Activated naive CD4-positive, alpha-beta T cell treated with anti-CD3 and anti-CD28 coated beads for 36 hours (primary cell): ENCODE measurements at regions of chr19 and their contacts with region 1.

Region 1: GRCh38 chr19:41263850-41264580 is at the start of gene HNRNPUL1:
- DNase-seq: peak; percentile 99
- H3K4me3 Mint-ChIP-seq: peak within 1 kb of the TSS; percentile 91
- H3K27ac Mint-ChIP-seq: peak within 1 kb of the TSS; percentile 99
- H3K4me1 Mint-ChIP-seq: peaks cover 28% of the 10 kb centered on the region
- H3K27me3 Mint-ChIP-seq: no peaks in the 10 kb centered on the region
- total RNA-seq, gene HNRNPUL1: 298 to 301 TPM

Region 2: DNA sequence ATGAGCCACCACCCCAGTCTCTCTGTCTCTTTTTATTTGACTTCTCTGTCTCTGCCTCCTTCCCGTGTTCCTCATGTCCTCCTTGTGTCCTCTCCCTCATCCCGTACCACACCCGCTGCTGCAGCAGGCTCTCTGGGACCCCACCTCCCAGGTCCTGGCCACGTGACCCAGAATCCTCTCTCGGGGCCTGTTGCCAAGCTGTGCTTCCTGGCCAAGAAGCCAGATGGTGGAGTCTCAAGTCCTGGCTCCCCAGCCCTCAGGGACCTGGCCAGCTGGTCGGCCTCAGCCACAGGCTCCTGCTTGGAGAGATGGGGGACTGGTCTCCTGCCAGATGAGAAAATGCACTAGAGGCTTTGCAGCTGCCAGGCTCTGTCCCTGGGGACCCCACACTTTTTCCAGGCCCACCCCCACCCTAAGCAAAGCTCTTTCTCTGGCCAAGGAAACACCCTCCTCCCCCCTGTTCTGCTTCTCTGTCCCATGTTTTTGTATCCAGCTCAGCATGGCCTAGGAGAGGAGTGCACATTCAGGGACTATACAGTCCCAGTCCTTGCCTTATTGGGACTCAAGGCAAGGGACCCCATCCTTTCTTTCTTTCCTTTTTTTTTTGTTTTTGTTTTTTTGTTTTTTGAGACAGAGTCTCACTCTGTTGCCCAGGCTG is 721.7 kb before region 1 on chr19:
- CTCF ChIA-PET with region 1: no interaction called
- intact Hi-C with region 1: no loop called
- DNase-seq: no peak
- H3K4me3 Mint-ChIP-seq: no peak overlapping the region
- H3K27ac Mint-ChIP-seq: no peak overlapping the region
- H3K4me1 Mint-ChIP-seq: no peaks in the 10 kb centered on the region
- H3K27me3 Mint-ChIP-seq: peaks cover 6% of the 10 kb centered on the region

Region 3: GRCh38 chr19:40750059-40750873 is 513.7 kb before region 1 on chr19 and contains the start of gene ACTMAP:
- CTCF ChIA-PET with region 1: no interaction called
- intact Hi-C with region 1: loop called (anchors 2 kb)
- DNase-seq: peak; percentile 100
- H3K4me3 Mint-ChIP-seq: peak within 1 kb of the TSS; percentile 99
- H3K27ac Mint-ChIP-seq: peak within 1 kb of the TSS; percentile 99
- H3K4me1 Mint-ChIP-seq: peaks cover 33% of the 10 kb centered on the region
- H3K27me3 Mint-ChIP-seq: no peaks in the 10 kb centered on the region
- total RNA-seq, gene ACTMAP: 23.0 to 25.0 TPM

Region 4: DNA sequence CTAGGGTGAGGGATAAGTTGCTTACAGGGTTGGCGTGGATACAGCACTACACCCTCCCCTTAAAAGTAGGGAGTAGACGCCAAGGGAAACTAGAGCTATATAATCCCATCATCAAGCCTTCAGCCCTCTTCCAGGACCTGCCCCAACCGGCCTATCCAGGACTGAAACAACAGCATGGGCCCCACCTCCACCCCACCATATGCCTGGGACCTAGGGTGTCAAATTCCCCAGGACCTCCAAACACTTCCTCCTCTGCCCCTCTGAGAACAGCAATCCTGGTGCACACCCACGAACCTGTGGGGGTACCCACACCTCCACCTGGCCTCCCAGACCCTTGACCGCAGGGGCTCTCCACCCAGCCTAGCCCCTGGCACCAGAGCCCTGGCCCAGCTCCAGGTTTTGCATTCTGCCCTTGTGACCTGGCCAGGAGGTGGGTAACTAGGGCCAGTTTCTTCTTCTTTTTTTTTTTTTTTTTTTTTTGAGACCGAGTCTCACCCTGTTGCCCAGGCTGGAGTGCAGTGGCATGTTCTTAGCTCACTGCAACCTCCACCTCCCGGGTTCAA is 151.2 kb before region 1 on chr19:
- CTCF ChIA-PET with region 1: no interaction called
- intact Hi-C with region 1: no loop called
- DNase-seq: no peak
- H3K4me3 Mint-ChIP-seq: no peak overlapping the region
- H3K27ac Mint-ChIP-seq: no peak overlapping the region
- H3K4me1 Mint-ChIP-seq: no peaks in the 10 kb centered on the region
- H3K27me3 Mint-ChIP-seq: no peaks in the 10 kb centered on the region

Region 5: DNA sequence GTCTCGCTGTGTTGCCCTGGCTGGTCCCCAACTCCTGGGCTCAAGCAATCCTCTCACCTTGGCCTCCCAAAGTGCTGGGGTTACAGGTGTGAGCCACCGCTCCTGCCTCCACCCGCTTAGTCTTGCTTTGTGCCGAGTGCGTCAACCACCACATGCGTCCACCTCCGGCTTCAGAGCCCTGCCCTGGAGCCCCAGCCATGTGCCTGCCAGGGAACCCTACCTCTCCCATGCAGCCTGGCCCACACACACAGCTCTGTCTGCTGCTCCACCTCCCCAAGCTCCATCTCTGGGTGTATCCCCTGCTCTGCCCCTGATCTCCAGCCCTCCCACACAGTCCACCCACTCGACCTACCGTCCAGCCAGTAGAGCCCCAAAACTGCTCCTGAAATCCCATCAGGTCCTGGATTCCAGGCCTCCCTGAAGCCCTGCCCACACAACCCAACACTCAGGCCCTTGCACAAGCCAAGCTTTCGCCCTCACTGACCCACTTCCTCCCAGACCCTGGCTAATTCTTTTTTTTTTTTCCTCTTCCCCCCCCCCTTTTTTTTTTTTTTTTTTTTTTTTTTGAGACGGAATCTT is 140.2 kb before region 1 on chr19:
- CTCF ChIA-PET with region 1: interaction called, 6 read pairs
- intact Hi-C with region 1: loop called (anchors 2 kb)
- DNase-seq: no peak
- H3K4me3 Mint-ChIP-seq: no peak overlapping the region
- H3K27ac Mint-ChIP-seq: no peak overlapping the region
- H3K4me1 Mint-ChIP-seq: peaks cover 27% of the 10 kb centered on the region
- H3K27me3 Mint-ChIP-seq: no peaks in the 10 kb centered on the region

Region 6: GRCh38 chr19:41298348-41298964 is 34.4 kb after region 1 on chr19:
- CTCF ChIA-PET with region 1: interaction called, 6 read pairs
- intact Hi-C with region 1: loop called (anchors 1 kb)
- DNase-seq: no peak
- H3K4me3 Mint-ChIP-seq: no peak overlapping the region
- H3K27ac Mint-ChIP-seq: peak overlapping the region; percentile 77
- H3K4me1 Mint-ChIP-seq: peaks cover 87% of the 10 kb centered on the region
- H3K27me3 Mint-ChIP-seq: no peaks in the 10 kb centered on the region

Region 7: DNA sequence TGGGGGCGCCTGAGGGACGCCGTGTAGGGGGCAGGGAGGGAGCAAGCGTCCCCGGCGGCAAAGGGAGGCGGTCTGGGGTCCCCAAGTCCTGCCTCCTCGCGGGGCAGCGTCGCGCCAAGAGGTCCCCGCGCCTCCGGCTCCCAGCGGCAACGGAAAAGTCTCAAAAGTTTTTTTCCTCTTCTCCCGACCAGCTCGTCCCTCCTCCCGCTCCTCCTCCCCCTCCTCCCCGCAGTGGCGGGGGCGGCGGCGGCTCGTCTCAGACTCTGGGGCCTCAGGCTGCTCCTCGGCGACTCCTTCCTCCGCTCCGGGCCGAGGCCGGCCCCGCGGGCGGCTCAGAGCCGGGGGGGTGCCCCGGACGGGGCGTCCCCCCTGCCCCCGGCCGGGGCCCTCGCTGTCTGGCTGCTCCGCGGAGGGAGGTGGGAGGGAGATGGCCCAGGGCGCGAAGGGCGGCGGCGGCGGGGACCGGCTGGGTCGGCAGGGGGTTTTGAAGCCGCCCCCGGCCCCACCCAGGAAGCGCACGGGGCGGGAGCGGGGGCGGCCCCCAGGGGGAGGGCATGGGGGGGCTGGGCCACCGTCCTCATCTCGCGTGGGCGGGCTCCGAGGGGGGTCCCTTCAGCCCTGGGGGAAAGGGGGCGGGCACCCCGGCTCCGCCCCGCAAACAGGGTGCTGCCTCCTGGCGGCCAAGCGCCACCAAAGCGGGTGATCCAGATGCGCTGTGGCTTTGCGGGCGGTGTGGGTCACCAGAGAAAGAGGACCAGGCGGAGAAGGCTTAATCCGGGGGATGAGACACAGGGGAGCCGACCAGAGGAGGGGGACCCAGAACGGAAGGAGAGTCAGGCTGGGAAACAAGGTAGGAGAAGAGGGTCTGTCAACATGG is 89.7 kb after region 1 on chr19 and contains the start of gene TGFB1:
- CTCF ChIA-PET with region 1: interaction called, 5 read pairs
- intact Hi-C with region 1: loop called (anchors 1 kb)
- DNase-seq: peak; percentile 94
- H3K4me3 Mint-ChIP-seq: peak within 1 kb of the TSS; percentile 91
- H3K27ac Mint-ChIP-seq: peak within 1 kb of the TSS; percentile 97
- H3K4me1 Mint-ChIP-seq: peaks cover 60% of the 10 kb centered on the region
- H3K27me3 Mint-ChIP-seq: no peaks in the 10 kb centered on the region
- total RNA-seq, gene TGFB1: 94.4 to 95.6 TPM

Region 8: DNA sequence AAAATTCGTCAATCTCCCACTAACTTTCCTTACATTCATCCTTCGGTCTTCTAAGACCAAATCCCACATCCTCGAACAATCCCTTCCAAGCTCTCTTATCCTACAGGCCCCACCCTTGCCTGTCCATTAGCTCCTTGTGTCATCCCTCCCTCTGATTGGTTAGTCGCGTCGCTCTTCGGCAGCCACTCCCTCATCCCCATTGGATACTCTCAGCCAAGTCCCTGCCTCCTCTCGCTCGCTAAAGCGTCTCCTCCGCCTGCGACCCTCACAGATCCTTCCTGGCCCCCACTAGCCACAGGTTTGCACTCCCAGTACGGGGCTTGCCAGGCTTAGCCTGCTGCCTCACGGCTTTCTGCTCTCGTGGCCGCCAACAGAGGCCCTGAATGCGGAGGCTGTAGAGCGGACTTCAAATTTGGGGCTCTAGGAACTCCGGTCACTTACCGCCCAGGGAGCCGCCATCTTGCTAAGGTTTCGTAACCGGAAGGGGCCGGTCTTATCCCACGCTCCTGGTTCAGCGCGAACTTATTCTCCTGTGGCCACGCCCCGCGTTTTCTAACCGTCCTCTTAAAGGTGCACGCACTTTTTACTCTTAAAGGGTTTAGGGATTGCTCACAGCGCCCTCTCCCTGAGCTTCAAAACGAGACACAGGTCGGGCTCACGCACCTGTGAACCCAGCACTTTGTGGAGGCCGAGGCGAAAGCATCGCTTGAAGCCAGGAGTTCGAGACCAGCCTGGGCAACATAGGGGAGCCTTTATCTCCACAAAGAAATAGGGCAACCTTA is 175.6 kb after region 1 on chr19 and contains the start of gene DMAC2:
- CTCF ChIA-PET with region 1: no interaction called
- intact Hi-C with region 1: loop called (anchors 1 kb)
- DNase-seq: peak; percentile 99
- H3K4me3 Mint-ChIP-seq: no peak within 1 kb of the TSS
- H3K27ac Mint-ChIP-seq: no peak within 1 kb of the TSS
- H3K4me1 Mint-ChIP-seq: peaks cover 13% of the 10 kb centered on the region
- H3K27me3 Mint-ChIP-seq: no peaks in the 10 kb centered on the region
- total RNA-seq, gene DMAC2: 51.5 to 53.8 TPM